ENCODE measurements at regions of chr1 and their contacts with region 1.

Region 1: DNA sequence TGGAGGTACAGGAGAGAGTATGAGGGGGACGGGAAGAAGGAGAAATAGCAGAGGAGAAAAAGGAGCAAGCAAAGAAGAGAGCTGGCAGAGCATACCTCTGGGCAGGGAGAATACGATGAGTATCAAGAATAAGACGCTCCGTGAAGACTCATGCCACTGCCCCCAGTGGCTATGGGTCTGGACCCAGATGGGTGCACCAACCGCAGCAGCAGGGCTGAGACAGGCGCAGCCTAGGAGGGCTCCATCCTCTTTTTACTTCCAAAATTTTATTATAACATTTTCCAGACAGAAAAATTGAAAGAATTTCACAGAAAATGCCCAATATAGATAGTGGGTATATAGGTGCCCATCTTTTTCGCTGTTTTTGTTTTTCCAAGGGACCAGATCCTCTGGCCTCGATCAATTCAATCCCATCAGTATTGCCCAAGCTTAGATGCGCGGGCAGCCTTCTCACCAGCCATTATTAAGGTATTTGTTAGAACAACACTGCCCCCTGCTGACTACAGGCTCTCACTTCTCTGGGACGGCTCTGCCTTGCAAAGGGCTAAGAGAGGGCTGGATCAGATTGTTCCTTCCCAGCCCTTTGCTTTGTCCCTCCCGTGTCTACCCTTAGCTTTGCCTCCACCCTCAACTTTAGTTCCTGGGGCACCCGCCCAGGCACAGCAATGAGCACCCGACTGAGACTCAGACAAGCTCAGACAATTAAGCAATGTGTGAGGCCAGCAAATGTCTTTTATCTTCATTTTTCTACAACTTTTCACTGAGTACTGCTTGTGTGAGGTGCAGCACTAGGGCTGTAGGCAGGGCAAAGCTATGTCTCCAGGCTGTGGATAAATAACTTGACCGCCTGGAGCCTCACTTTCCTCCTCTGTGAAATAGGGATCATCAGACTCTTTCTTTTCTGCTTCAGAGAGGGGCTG is 17.5 kb upstream of the CAMK1G start:
- DNase-seq: peak; percentile 85
- H3K4me3 Mint-ChIP-seq: no peak overlapping the region
- H3K27ac Mint-ChIP-seq: no peak overlapping the region
- H3K4me1 Mint-ChIP-seq: peaks cover 13% of the 10 kb centered on the region
- H3K27me3 Mint-ChIP-seq: peaks cover 19% of the 10 kb centered on the region

Region 2: GRCh38 chr1:209576798-209577197 is 10.8 kb after region 1 on chr1:
- CTCF ChIA-PET with region 1: interaction called, 22 read pairs
- POLR2A ChIA-PET with region 1: no interaction called
- DNase-seq: peak; percentile 72
- H3K4me3 Mint-ChIP-seq: no peak overlapping the region
- H3K27ac Mint-ChIP-seq: no peak overlapping the region
- H3K4me1 Mint-ChIP-seq: no peaks in the 10 kb centered on the region
- H3K27me3 Mint-ChIP-seq: peaks cover 21% of the 10 kb centered on the region

Region 3: GRCh38 chr1:209624558-209625549 is 58.8 kb after region 1 on chr1:
- CTCF ChIA-PET with region 1: interaction called, 11 read pairs
- POLR2A ChIA-PET with region 1: no interaction called
- DNase-seq: no peak
- H3K4me3 Mint-ChIP-seq: no peak overlapping the region
- H3K27ac Mint-ChIP-seq: no peak overlapping the region
- H3K4me1 Mint-ChIP-seq: no peaks in the 10 kb centered on the region
- H3K27me3 Mint-ChIP-seq: no peaks in the 10 kb centered on the region